Dendritic cell treated with granulocyte-macrophage colony-stimulating factor and Interleukin-4, amounts not matched to agents 40 ng/mL and 50 ng/mL, for 4 days (primary cell): ENCODE measurements at regions of chr1 and their contacts with region 1.

Region 1: DNA sequence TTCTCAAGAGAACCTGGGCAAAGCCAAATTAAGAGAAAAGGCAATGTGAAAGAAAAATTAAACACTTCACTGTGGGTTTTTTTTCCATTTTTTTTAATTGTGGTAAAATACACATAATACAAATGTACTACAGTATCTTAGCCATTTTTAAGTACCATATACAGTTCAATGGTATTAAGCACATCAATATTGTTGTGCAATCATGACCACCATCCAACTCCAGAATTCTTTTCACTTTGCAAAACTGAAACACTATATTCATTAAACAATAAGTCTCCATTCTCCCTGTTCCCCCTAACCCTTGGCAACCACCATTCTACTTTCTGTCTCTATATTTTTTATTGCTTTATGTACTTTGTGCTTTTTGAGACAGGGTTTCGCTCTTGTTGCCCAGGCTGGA is 17.8 kb upstream of the OTUD7B start:
- H3K4me3 Mint-ChIP-seq: no peak overlapping the region
- H3K27ac Mint-ChIP-seq: no peak overlapping the region
- H3K4me1 Mint-ChIP-seq: no peaks in the 10 kb centered on the region
- H3K27me3 Mint-ChIP-seq: peaks cover 61% of the 10 kb centered on the region

Region 2: DNA sequence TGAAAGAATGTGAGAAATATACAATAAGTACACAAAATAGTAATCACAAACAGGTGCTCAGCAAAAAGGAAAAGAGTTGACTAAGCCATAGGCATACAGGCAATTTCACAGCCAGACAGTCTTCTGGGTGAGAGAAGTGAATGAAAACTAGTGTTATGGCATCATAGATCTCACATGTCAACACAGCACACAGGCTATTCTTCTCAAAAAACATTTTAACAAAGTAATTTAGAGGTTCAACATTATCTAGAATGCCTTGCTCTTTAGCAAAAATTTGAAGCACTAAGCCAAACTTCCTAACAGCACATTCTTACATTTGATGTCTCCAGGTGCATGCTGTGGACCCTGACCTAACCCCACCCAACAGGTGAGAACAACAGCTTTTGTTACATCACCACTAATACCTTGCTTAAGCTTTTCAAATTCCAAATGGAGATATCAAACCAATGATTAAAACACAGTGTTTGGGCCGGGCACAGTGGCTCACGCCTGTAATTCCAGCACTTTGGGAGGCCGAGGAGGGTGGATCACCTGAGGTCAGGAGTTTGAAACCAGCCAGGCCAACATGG is 48.3 kb before region 1 on chr1:
- intact Hi-C with region 1: loop called (anchors 5 kb)
- H3K4me3 Mint-ChIP-seq: no peak overlapping the region
- H3K27ac Mint-ChIP-seq: no peak overlapping the region
- H3K4me1 Mint-ChIP-seq: no peaks in the 10 kb centered on the region
- H3K27me3 Mint-ChIP-seq: peaks cover 92% of the 10 kb centered on the region